Activated CD8-positive, alpha-beta T cell treated with anti-CD3 and anti-CD28 coated beads for 36 hours (primary cell): ENCODE measurements at regions of chr2 and their contacts with region 1.

Region 1: DNA sequence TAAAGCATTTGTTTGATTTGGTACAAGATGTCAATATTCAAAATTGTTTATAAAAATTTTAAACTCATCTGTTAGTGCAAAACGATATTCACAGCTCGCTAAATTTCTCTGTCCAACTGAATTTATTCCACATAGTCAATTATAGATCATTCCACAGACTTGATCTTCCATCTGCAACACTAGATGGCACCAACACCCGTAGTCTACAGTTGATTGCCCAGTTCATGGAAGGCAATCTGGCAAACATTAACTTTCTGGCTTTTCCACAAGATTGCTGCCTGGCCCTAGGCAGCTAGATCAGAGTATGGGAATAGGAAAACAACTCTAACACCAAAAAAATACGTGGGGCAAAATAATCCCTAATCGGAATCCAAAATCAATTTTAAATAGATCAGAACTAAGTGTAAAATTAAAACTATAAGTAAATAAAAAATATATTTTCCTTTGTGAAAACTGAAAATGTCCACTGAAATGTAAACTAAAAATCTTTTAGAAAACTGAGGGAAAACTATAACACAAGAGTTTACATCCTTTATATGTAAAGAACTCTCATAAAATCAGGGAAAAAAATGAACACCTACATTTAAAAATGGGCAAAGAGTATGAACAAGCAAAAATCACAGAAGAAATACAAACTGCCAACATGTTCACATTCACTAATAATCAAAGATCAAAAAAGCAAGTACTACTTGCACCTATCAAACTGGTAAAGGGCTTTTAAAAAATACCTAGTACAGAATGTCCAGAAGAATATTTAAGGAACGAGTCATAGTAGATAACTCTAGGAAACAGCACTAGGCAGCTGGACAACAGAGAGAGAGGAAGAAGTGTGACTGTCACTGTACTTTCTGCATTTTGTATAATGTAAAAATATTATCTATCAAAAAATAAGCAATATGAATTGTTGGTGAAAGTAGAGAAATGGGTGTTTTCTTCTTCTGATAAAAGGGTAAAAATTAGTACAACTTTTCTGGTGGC is 35.0 kb downstream of the RTN4 start:
- DNase-seq: peak; percentile 44
- ATAC-seq: no peak
- H3K4me3 Mint-ChIP-seq: no peak overlapping the region
- H3K27ac Mint-ChIP-seq: no peak overlapping the region
- H3K4me1 Mint-ChIP-seq: peaks cover 36% of the 10 kb centered on the region
- H3K27me3 Mint-ChIP-seq: no peaks in the 10 kb centered on the region
- CTCF ChIP-seq: peak; percentile 72

Region 2: DNA sequence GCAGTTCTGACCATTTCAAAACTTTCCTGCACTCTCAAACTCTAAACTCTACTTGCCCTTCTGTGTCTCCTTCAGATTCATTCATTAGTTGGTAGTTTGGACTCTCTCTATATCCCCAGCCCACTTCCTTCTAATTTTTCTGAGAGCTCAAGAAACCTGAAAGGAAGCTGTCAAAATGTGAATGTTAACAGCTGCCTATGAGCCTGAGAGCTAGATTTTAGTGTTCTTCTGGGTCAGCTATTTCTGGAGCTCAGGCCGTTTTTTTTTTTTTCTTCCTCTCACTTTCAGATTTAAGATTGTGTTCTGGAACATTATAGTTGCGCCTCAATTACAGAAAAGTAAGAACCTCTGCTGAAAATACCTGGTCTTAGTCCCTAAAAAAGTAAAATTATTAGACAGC is 38.1 kb before region 1 on chr2:
- CTCF ChIA-PET with region 1: no interaction called
- POLR2A ChIA-PET with region 1: no interaction called
- intact Hi-C with region 1: no loop called
- DNase-seq: no peak
- ATAC-seq: no peak
- H3K4me3 Mint-ChIP-seq: no peak overlapping the region
- H3K27ac Mint-ChIP-seq: no peak overlapping the region
- H3K4me1 Mint-ChIP-seq: peaks cover 33% of the 10 kb centered on the region
- H3K27me3 Mint-ChIP-seq: no peaks in the 10 kb centered on the region
- CTCF ChIP-seq: no peak

Region 3: GRCh38 chr2:55026202-55026601 is 11.0 kb after region 1 on chr2:
- CTCF ChIA-PET with region 1: interaction called, 13 read pairs
- POLR2A ChIA-PET with region 1: no interaction called
- intact Hi-C with region 1: no loop called
- DNase-seq: no peak
- ATAC-seq: no peak
- H3K4me3 Mint-ChIP-seq: no peak overlapping the region
- H3K27ac Mint-ChIP-seq: no peak overlapping the region
- H3K4me1 Mint-ChIP-seq: peaks cover 14% of the 10 kb centered on the region
- H3K27me3 Mint-ChIP-seq: no peaks in the 10 kb centered on the region
- CTCF ChIP-seq: no peak

Region 4: GRCh38 chr2:55175254-55176025 is 160.2 kb after region 1 on chr2:
- CTCF ChIA-PET with region 1: interaction called, 10 read pairs
- POLR2A ChIA-PET with region 1: no interaction called
- intact Hi-C with region 1: no loop called
- DNase-seq: no peak
- ATAC-seq: peak; percentile 88
- H3K4me3 Mint-ChIP-seq: no peak overlapping the region
- H3K27ac Mint-ChIP-seq: no peak overlapping the region
- H3K4me1 Mint-ChIP-seq: peaks cover 8% of the 10 kb centered on the region
- H3K27me3 Mint-ChIP-seq: no peaks in the 10 kb centered on the region
- CTCF ChIP-seq: peak; percentile 71